ENCODE measurements at regions of chr2 and their contacts with region 1.

Region 1: DNA sequence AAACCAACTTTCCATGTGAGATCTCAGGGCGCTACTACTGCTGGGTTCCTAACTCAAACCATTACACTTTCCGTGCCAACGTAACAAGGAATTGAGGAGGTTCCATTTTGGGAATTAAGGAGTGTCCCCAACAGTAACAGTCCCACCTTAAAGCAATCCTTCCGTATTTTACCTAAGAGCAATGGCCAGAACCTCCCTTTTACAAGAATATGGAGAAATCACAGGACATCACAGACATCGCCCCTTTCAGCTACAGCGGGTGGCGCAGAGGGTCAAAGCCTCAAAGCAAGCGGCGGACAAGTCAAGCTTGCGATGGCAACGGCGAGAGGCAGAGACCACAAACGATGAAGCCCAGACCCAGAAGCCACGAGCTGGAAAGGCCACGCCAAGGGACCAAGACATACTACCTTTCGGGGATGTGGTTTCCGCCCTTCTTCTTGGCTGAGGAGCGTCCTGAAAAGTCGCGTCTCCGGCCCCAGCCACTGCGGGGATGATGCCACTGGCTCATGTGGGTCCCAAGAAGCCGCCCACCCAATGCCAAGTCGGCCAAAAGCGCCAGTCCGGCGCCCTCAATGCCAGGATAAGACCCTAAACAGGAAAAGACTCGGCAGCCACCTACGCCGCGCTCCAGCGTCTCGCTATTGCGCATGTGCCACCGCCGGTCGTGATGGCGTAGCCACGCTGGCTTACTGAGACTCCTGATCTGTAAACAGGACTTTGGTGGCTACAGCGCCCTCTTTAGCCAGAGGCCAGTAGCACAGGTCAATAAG is at the start of gene DUSP11:
- DNase-seq: peak; percentile 87 to 95
- ATAC-seq: peak; percentile 99
- H3K4me3 ChIP-seq: peak within 1 kb of the TSS; percentile 83 to 99 (median 98)
- H3K27ac ChIP-seq: peak within 1 kb of the TSS; percentile 90 to 98 (median 96)
- H3K4me1 ChIP-seq: peaks cover 13 to 15% of the 10 kb centered on the region in 2 donors
- H3K27me3 ChIP-seq: no peaks in the 10 kb centered on the region
- CTCF ChIP-seq: peak; percentile 86 to 93 (median 89)
- POLR2A ChIP-seq: peak; percentile 78 to 80
- total RNA-seq, gene DUSP11: 13.6 to 15.8 (median 14.7) TPM

Region 2: GRCh38 chr2:73638429-73638828 is 141.2 kb before region 1 on chr2:
- in situ Hi-C with region 1: no loop called
- intact Hi-C with region 1: loop called (anchors 10 kb)
- DNase-seq: no peak
- ATAC-seq: no peak
- H3K4me3 ChIP-seq: no peak overlapping the region
- H3K27ac ChIP-seq: no peak overlapping the region
- H3K4me1 ChIP-seq: no peaks in the 10 kb centered on the region
- H3K27me3 ChIP-seq: no peaks in the 10 kb centered on the region
- CTCF ChIP-seq: no peak
- POLR2A ChIP-seq: no peak

Region 3: DNA sequence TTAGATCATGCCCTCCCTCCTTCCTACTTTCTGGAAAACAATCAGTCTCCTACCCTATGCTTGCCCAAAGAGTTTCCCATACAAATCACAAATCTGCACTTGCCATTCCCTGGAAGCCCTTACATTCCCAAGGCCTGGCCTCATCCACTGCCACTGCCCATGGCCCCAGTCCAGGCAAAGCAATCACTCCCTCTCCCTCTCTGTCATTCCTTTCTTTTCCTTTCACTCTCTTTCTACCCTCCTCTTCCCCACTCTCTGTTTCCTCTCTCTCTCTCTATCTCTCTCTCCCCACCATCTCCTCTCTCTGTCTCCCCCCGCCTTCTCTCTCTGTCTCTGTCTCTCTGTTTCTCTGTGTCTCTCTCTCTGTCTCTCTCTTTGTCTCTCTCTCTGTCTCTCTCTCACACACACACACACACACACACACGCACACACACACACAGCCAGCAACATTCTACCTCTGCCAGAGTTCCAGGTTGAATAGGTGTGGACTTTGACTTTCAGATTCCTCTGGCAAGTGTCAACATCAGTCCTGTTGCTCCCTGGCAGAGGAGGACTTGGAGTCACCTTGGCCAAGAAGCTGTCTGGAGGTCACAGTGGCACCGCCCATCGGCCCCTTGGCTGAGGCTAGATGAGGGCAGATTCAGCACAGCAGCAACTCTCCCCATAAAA is 93.7 kb before region 1 on chr2:
- in situ Hi-C with region 1: loop called in 2 of 4 experiments (anchors 25 kb)
- intact Hi-C with region 1: loop called (anchors 10 kb)
- DNase-seq: no peak
- ATAC-seq: no peak
- H3K4me3 ChIP-seq: no peak overlapping the region
- H3K27ac ChIP-seq: no peak overlapping the region
- H3K4me1 ChIP-seq: no peaks in the 10 kb centered on the region
- H3K27me3 ChIP-seq: no peaks in the 10 kb centered on the region
- CTCF ChIP-seq: no peak
- POLR2A ChIP-seq: no peak

Region 4: GRCh38 chr2:73697606-73698005 is 82.0 kb before region 1 on chr2:
- in situ Hi-C with region 1: loop called in 2 of 4 experiments (anchors 25 kb)
- intact Hi-C with region 1: loop called (anchors 10 kb)
- DNase-seq: no peak
- ATAC-seq: no peak
- H3K4me3 ChIP-seq: no peak overlapping the region
- H3K27ac ChIP-seq: no peak overlapping the region
- H3K4me1 ChIP-seq: no peaks in the 10 kb centered on the region
- H3K27me3 ChIP-seq: no peaks in the 10 kb centered on the region
- CTCF ChIP-seq: no peak
- POLR2A ChIP-seq: no peak

Measured in gastrocnemius medialis (tissue), 4 donors.